ENCODE measurements at regions of chr13 and their contacts with region 1.

Region 1: GRCh38 chr13:27620377-27621115 is at the start of gene LNX2:
- DNase-seq: peak; percentile 94 to 98 (median 97)
- ATAC-seq: peak; percentile 83
- H3K4me3 ChIP-seq: peak within 1 kb of the TSS; percentile 67 to 96
- H3K4me3 Mint-ChIP-seq: peak within 1 kb of the TSS; percentile 96
- H3K27ac ChIP-seq: peak within 1 kb of the TSS; percentile 83 to 98
- H3K27ac Mint-ChIP-seq: peak within 1 kb of the TSS; percentile 97
- H3K4me1 ChIP-seq: peaks cover 36% of the 10 kb centered on the region
- H3K4me1 Mint-ChIP-seq: peaks cover 63% of the 10 kb centered on the region
- H3K27me3 ChIP-seq: no peaks in the 10 kb centered on the region
- H3K27me3 Mint-ChIP-seq: no peaks in the 10 kb centered on the region
- CTCF ChIP-seq: no peak
- total RNA-seq, gene LNX2: 3.0 to 3.5 TPM

Region 2: DNA sequence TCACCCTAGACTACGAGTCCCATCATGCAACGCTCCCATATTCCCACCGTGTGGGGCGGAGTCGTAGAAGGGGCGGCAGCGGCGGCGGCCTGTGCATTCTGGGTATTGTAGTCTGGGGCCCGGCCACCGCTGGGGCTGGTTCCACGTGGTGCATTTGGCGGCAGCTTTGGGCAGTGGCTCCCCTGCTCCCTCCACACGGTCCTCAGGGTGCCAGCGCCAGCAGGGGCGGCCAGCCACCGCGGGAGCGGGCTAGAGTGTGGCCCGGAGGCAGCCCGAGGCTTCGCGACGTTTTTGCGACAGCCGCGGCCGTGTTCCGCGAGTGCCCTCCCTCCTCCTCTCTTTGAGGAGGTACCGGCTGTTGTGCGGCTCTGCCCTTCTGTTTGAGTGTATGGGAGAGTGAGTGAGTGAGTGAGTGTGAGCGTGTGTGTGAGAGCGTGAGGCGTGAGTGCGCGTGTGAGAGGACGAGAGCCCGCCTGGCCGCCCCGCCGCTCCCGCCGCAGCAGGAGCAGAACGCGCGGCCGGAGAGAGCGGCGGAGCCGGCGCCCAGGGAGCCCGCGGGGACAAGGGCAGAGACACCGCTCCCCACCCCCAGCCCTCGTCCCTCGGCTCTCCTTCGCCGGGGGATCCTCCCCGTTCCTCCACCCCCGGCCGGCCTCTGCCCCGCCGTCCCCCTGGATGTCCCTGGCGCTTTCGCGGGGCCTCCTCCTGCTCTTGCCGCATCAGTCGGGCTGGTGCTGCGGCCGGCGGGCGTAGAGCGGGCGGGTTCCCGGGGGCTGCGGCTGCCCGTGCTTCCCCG is 1366.6 kb before region 1 on chr13 and contains the start of gene CDK8:
- CTCF ChIA-PET with region 1: no interaction called
- POLR2A ChIA-PET with region 1: no interaction called
- intact Hi-C with region 1: loop called in 1 of 2 experiments (anchors 10 kb)
- DNase-seq: peak; percentile 78 to 95 (median 90)
- ATAC-seq: peak; percentile 87
- H3K4me3 ChIP-seq: peak within 1 kb of the TSS; percentile 79 to 100
- H3K4me3 Mint-ChIP-seq: peak within 1 kb of the TSS; percentile 90
- H3K27ac ChIP-seq: peak within 1 kb of the TSS; percentile 59 to 92
- H3K27ac Mint-ChIP-seq: peak within 1 kb of the TSS; percentile 88
- H3K4me1 ChIP-seq: peaks cover 27% of the 10 kb centered on the region
- H3K4me1 Mint-ChIP-seq: peaks cover 37% of the 10 kb centered on the region
- H3K27me3 ChIP-seq: no peaks in the 10 kb centered on the region
- H3K27me3 Mint-ChIP-seq: peaks cover 2% of the 10 kb centered on the region
- CTCF ChIP-seq: no peak
- total RNA-seq, gene CDK8: 4.9 to 5.3 TPM

Region 3: DNA sequence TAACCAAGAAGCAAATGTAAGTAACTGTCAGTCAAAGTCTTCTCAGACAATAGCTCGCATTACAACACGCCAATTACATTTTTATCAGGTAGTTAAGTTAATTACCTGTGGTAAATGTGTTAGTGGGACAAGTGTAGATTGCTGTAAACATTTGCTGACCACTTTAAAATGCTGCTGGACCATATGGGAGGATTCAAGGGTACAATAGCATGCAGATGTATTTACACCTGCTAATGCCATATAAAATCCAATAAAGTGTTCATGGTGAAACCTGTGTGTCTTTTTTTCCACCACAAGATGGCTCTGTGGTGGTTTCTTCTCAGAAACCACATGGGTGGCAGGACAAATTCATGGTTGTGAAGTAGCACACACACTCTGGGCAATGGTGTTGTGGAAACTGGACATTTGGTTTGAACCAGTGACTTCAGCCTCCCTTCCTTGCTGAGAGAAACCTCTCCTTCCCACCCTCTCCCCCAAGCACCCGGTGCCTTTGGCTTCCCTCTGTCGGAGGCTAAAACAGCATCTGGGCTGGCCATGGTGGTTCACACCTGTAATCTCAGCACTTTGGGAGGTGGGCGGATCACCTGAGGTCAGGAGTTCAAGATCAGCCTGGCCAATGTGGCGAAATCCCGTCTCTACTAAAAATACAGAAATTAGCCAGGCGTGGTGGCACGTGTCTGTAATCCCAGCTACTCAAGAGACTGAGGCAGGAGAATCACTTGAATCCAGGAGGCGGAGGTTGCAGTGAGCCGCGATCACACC is 214.2 kb before region 1 on chr13:
- CTCF ChIA-PET with region 1: interaction called, 4 read pairs
- POLR2A ChIA-PET with region 1: no interaction called
- intact Hi-C with region 1: loop called in 1 of 2 experiments (anchors 1 kb)
- DNase-seq: peak in 7 of 9 experiments; percentile 18 to 77 (median 44)
- ATAC-seq: peak; percentile 56
- H3K4me3 ChIP-seq: no peak overlapping the region
- H3K4me3 Mint-ChIP-seq: no peak overlapping the region
- H3K27ac ChIP-seq: no peak overlapping the region
- H3K27ac Mint-ChIP-seq: no peak overlapping the region
- H3K4me1 ChIP-seq: no peaks in the 10 kb centered on the region
- H3K4me1 Mint-ChIP-seq: peaks cover 4% of the 10 kb centered on the region
- H3K27me3 ChIP-seq: no peaks in the 10 kb centered on the region
- H3K27me3 Mint-ChIP-seq: no peaks in the 10 kb centered on the region
- CTCF ChIP-seq: peak; percentile 54

Region 4: DNA sequence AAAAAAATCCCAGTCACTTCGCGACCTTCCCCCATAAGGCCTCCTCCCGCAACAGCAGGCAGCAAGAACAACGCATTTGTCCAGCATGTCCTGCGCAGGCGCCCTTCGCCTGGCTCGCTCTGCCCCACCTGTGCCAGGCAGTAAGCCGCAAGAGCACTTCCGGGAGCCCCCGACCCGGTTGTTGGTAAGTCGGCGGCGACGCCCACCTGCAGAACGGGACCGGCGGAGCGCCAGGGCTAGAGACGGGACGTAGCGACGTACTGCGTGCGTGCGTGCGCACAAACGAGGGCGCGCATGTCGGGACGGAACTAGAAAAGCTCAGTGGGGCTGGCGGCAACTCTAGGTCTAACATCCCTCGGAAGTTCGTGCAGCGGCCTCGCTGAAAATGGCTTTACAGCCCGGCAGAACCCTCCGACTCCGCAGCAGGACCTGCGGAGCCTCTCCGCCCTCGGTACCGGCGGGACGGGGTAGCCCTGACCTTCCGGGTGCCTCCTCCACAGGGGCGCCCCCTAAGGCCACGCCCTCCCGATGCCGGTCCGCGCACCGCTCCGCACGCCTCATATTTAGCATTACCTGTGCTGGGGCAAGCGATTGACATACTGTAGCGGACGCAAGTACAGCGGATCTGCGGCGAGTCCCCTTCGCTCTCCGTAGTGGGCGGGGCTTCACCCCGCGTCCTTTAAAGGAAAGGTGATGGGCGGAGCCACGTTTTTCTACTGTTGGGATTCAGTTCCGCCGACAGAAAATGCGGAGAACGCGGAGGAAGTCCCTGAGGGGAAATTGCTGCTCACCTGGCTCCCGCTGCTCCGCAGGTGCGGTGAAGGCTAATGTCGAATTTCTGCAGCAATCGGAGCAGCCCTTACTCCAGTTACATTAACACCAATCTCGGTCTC is 170.4 kb before region 1 on chr13 and contains the start of gene MTIF3:
- CTCF ChIA-PET with region 1: no interaction called
- POLR2A ChIA-PET with region 1: interaction called, 38 read pairs
- intact Hi-C with region 1: loop called (anchors 1 kb)
- DNase-seq: peak; percentile 94 to 99 (median 98)
- ATAC-seq: peak; percentile 81
- H3K4me3 ChIP-seq: peak within 1 kb of the TSS; percentile 82 to 92
- H3K4me3 Mint-ChIP-seq: peak within 1 kb of the TSS; percentile 93
- H3K27ac ChIP-seq: peak within 1 kb of the TSS; percentile 90 to 97
- H3K27ac Mint-ChIP-seq: peak within 1 kb of the TSS; percentile 99
- H3K4me1 ChIP-seq: peaks cover 54% of the 10 kb centered on the region
- H3K4me1 Mint-ChIP-seq: peaks cover 57% of the 10 kb centered on the region
- H3K27me3 ChIP-seq: no peaks in the 10 kb centered on the region
- H3K27me3 Mint-ChIP-seq: no peaks in the 10 kb centered on the region
- CTCF ChIP-seq: no peak
- total RNA-seq, gene MTIF3: 12.7 to 13.0 TPM

Region 5: DNA sequence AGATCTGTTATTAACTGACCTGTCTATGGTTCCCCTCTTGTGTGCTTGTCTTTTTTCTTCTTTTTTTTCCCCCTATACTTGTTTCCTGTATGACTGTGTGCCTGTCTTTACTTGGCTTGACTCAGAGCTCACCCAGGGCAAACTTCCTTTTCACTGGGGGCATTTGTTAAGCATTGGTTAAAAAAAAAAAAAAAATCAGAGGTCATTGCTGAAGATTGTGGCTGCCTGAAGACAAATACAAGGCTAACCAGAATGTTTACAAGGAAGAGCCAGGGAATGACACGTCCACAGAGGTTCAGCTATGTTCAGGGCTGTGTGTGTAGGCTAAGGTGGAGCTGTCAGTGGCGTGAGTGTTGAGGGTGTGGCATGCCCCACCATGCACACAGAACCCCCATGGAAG is 47.3 kb before region 1 on chr13:
- CTCF ChIA-PET with region 1: interaction called, 3 read pairs
- POLR2A ChIA-PET with region 1: no interaction called
- intact Hi-C with region 1: loop called in 1 of 2 experiments (anchors 5 kb)
- DNase-seq: no peak
- ATAC-seq: no peak
- H3K4me3 ChIP-seq: no peak overlapping the region
- H3K4me3 Mint-ChIP-seq: no peak overlapping the region
- H3K27ac ChIP-seq: no peak overlapping the region
- H3K27ac Mint-ChIP-seq: no peak overlapping the region
- H3K4me1 ChIP-seq: no peaks in the 10 kb centered on the region
- H3K4me1 Mint-ChIP-seq: peaks cover 20% of the 10 kb centered on the region
- H3K27me3 ChIP-seq: no peaks in the 10 kb centered on the region
- H3K27me3 Mint-ChIP-seq: no peaks in the 10 kb centered on the region
- CTCF ChIP-seq: no peak

Region 6: GRCh38 chr13:27678306-27679040 is 57.9 kb after region 1 on chr13:
- CTCF ChIA-PET with region 1: no interaction called
- POLR2A ChIA-PET with region 1: no interaction called
- intact Hi-C with region 1: no loop called
- DNase-seq: no peak
- ATAC-seq: no peak
- H3K4me3 ChIP-seq: no peak overlapping the region
- H3K4me3 Mint-ChIP-seq: no peak overlapping the region
- H3K27ac ChIP-seq: no peak overlapping the region
- H3K27ac Mint-ChIP-seq: no peak overlapping the region
- H3K4me1 ChIP-seq: no peaks in the 10 kb centered on the region
- H3K4me1 Mint-ChIP-seq: no peaks in the 10 kb centered on the region
- H3K27me3 ChIP-seq: no peaks in the 10 kb centered on the region
- H3K27me3 Mint-ChIP-seq: peaks cover 12% of the 10 kb centered on the region
- CTCF ChIP-seq: no peak

Region 7: GRCh38 chr13:28138012-28138755 is 517.6 kb after region 1 on chr13 and contains the start of gene PAN3:
- CTCF ChIA-PET with region 1: no interaction called
- POLR2A ChIA-PET with region 1: interaction called, 5 read pairs
- intact Hi-C with region 1: loop called in 1 of 2 experiments (anchors 2 kb)
- DNase-seq: peak; percentile 83 to 96 (median 93)
- ATAC-seq: peak; percentile 54
- H3K4me3 ChIP-seq: peak within 1 kb of the TSS; percentile 67 to 80
- H3K4me3 Mint-ChIP-seq: peak within 1 kb of the TSS; percentile 97
- H3K27ac ChIP-seq: peak within 1 kb of the TSS; percentile 90 to 97
- H3K27ac Mint-ChIP-seq: peak within 1 kb of the TSS; percentile 98
- H3K4me1 ChIP-seq: peaks cover 35% of the 10 kb centered on the region
- H3K4me1 Mint-ChIP-seq: peaks cover 52% of the 10 kb centered on the region
- H3K27me3 ChIP-seq: no peaks in the 10 kb centered on the region
- H3K27me3 Mint-ChIP-seq: no peaks in the 10 kb centered on the region
- CTCF ChIP-seq: no peak
- total RNA-seq, gene PAN3: 55.8 to 55.9 TPM

Region 8: GRCh38 chr13:28718543-28719226 is 1098.1 kb after region 1 on chr13 and contains the start of gene SLC46A3:
- CTCF ChIA-PET with region 1: no interaction called
- POLR2A ChIA-PET with region 1: no interaction called
- intact Hi-C with region 1: loop called in 1 of 2 experiments (anchors 2 kb)
- DNase-seq: peak; percentile 94 to 99 (median 97)
- ATAC-seq: peak; percentile 98
- H3K4me3 ChIP-seq: peak within 1 kb of the TSS; percentile 94 to 97
- H3K4me3 Mint-ChIP-seq: peak within 1 kb of the TSS; percentile 93
- H3K27ac ChIP-seq: peak within 1 kb of the TSS; percentile 88 to 91
- H3K27ac Mint-ChIP-seq: peak within 1 kb of the TSS; percentile 97
- H3K4me1 ChIP-seq: peaks cover 22% of the 10 kb centered on the region
- H3K4me1 Mint-ChIP-seq: peaks cover 40% of the 10 kb centered on the region
- H3K27me3 ChIP-seq: no peaks in the 10 kb centered on the region
- H3K27me3 Mint-ChIP-seq: no peaks in the 10 kb centered on the region
- CTCF ChIP-seq: no peak
- total RNA-seq, gene SLC46A3: 5.9 TPM